Dendritic cell treated with granulocyte-macrophage colony-stimulating factor and Interleukin-4, amounts not matched to agents 40 ng/mL and 50 ng/mL, for 4 days (primary cell): ENCODE measurements at regions of chr5 and their contacts with region 1.

Region 1: GRCh38 chr5:79020861-79021561 is 35.9 kb upstream of the ARSB start:
- H3K4me3 Mint-ChIP-seq: no peak overlapping the region
- H3K27ac Mint-ChIP-seq: no peak overlapping the region
- H3K4me1 Mint-ChIP-seq: peaks cover 15% of the 10 kb centered on the region
- H3K27me3 Mint-ChIP-seq: peaks cover 37% of the 10 kb centered on the region

Region 2: DNA sequence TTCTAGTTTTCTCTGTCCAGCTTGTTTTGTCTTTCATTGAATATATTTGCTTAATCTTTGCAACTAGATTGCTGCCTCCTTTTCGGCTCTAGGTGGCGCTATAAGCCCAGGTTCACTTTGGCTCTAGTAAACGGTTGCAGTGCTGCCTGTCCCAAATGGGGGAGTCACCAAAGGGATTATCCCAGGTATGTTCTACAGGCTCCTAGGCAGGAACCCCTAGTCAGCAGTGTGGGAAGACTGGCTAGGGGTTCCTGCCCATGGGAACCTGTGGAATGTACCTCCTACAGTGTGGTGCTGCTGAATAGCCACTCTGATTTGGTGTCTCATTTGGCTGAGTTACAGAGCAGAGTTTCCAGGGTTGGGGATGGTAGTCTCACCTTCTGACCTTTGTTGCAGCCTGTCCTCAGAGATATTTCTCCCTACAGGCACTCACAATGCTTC is 121.1 kb before region 1 on chr5:
- intact Hi-C with region 1: loop called (anchors 5 kb)
- H3K4me3 Mint-ChIP-seq: no peak overlapping the region
- H3K27ac Mint-ChIP-seq: no peak overlapping the region
- H3K4me1 Mint-ChIP-seq: peaks cover 28% of the 10 kb centered on the region
- H3K27me3 Mint-ChIP-seq: no peaks in the 10 kb centered on the region

Region 3: DNA sequence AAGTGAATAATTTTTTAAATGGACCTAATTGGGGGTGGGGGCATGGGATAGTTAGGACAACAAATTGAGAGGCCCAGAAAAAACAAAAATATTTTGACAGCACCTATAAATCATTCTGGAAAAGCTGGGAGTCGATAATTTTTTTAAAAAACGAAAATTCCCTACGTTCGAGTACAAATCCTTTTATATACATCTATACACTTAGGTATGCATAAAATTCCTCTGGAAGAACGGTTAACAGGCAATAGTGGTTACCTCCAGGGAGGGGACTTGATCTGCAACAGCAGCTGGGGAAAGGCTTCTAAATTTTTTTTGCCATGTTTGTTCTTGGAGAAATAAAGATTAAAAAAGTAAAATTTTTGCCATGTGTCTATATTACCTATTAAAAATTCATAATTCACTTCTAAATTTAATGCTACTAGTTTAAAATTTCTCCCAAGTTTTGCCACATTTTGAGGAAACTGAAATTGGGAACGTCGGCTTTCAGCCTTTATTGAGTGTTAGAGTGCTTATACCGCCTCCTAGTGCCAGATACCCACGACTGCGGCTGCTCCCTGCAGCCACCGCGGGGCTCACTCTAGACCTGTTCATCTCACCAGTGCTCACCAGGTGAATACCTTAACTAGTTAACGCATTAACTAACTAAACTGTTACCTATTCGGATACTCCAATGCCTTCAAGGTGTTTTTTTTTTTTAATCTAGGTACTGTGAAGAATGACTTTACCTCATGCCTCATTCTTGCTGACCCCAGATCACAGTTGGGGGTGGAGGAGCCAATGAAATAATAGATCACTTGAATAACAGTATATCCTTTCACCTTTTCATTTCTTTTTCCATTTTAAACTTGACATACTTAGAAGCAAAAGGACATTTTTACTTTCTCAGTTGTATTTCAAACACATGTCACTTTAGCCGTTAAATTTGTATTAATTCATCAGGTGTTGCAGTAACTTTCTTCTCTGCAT is 88.8 kb after region 1 on chr5:
- intact Hi-C with region 1: loop called (anchors 1 kb)
- H3K4me3 Mint-ChIP-seq: no peak overlapping the region
- H3K27ac Mint-ChIP-seq: no peak overlapping the region
- H3K4me1 Mint-ChIP-seq: peaks cover 32% of the 10 kb centered on the region
- H3K27me3 Mint-ChIP-seq: peaks cover 35% of the 10 kb centered on the region

Region 4: DNA sequence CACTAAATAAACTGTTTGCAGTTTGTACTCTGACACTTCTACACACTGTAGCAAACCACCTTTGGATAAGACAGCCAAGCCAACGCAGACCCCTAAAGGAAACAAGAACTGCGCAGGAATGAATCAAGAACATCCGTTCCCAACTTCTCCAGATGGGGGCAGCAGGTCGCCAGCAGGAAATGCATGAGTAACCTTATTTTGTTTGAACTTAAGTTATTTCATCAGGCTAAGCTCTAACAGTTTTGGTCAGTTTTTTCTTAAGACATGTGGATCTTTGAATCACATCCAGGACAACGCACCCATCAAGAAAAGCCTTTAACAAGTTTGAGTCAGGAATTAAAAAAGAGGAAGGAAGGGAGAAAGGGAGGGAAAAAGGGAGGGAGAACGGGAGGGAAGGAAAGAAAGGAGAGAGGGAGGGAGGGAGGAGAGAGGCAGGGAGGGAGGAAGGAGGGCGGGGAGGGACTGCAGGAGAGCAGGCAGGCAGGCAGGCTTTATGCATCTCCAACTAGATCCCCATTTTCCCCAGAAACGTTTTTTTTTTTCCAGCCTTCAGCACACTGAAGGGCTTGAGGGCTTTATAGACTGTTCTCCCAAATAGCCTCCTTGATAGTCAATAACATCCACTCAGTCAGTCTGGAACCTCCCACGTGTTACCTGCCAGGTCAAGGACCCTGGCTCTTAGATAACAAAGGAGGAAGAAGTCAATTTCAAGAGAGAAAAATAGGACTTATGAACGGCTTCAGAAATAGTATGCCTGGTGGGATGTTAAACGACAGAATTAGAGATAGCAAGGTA is 112.8 kb after region 1 on chr5:
- intact Hi-C with region 1: loop called (anchors 1 kb)
- H3K4me3 Mint-ChIP-seq: no peak overlapping the region
- H3K27ac Mint-ChIP-seq: no peak overlapping the region
- H3K4me1 Mint-ChIP-seq: peaks cover 11% of the 10 kb centered on the region
- H3K27me3 Mint-ChIP-seq: peaks cover 3% of the 10 kb centered on the region

Region 5: GRCh38 chr5:79464695-79465332 is 443.8 kb after region 1 on chr5:
- intact Hi-C with region 1: loop called (anchors 5 kb)
- H3K4me3 Mint-ChIP-seq: no peak overlapping the region
- H3K27ac Mint-ChIP-seq: no peak overlapping the region
- H3K4me1 Mint-ChIP-seq: no peaks in the 10 kb centered on the region
- H3K27me3 Mint-ChIP-seq: peaks cover 6% of the 10 kb centered on the region